Calu3 (cell line): ENCODE measurements at regions of chr19 and their contacts with region 1.

Region 1: GRCh38 chr19:18251587-18252369 is 22.5 kb downstream of the IQCN start:
- DNase-seq: peak; percentile 75
- H3K4me3 Mint-ChIP-seq: no peak overlapping the region
- H3K27ac Mint-ChIP-seq: no peak overlapping the region
- H3K4me1 Mint-ChIP-seq: peaks cover 21% of the 10 kb centered on the region
- H3K27me3 Mint-ChIP-seq: no peaks in the 10 kb centered on the region
- CTCF ChIP-seq: peak; percentile 76

Region 2: GRCh38 chr19:18007044-18007916 is 244.5 kb before region 1 on chr19:
- CTCF ChIA-PET with region 1: no interaction called
- intact Hi-C with region 1: loop called (anchors 5 kb)
- DNase-seq: peak; percentile 84
- H3K4me3 Mint-ChIP-seq: peak overlapping the region; percentile 72
- H3K27ac Mint-ChIP-seq: peak overlapping the region; percentile 30
- H3K4me1 Mint-ChIP-seq: peaks cover 11% of the 10 kb centered on the region
- H3K27me3 Mint-ChIP-seq: no peaks in the 10 kb centered on the region
- CTCF ChIP-seq: peak; percentile 76

Region 3: GRCh38 chr19:18112989-18113478 is 138.7 kb before region 1 on chr19:
- CTCF ChIA-PET with region 1: interaction called, 14 read pairs
- intact Hi-C with region 1: no loop called
- DNase-seq: peak; percentile 89
- H3K4me3 Mint-ChIP-seq: no peak overlapping the region
- H3K27ac Mint-ChIP-seq: no peak overlapping the region
- H3K4me1 Mint-ChIP-seq: peaks cover 19% of the 10 kb centered on the region
- H3K27me3 Mint-ChIP-seq: no peaks in the 10 kb centered on the region
- CTCF ChIP-seq: peak; percentile 57

Region 4: DNA sequence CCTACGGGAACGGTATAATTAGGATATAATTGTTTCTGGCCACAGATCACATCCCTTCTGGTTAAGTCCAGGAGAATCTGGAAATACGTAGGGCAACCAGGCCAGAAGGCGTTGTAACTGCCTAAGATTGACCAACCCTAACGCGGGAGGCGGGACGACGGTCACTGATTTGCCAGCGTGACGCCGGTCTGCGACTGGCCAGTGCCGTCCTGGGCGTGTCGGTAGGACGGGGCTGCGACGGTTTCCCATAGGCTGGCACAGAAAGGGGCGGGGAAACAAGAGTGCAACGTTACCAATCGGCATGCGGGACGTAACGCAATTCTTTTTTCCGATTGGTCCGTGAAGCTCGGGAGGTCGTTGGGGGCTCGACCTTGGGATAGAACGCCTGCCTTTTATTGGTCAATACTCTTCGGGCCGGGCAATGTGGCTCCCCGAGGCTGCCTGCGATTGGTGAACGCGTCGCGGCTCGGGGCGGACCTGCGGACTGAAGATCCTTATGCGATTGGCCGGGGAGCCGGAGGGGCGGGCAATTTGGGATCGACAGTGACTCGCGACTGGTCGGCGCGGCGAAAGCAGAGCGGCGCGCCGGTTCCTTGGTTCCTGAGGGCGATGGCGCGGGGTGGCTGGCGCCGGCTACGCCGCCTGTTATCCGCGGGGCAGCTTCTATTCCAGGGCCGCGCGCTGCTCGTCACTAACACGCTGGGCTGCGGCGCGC is 58.9 kb before region 1 on chr19 and contains the start of gene MPV17L2:
- CTCF ChIA-PET with region 1: interaction called, 15 read pairs
- intact Hi-C with region 1: no loop called
- DNase-seq: peak; percentile 96
- H3K4me3 Mint-ChIP-seq: peak within 1 kb of the TSS; percentile 72
- H3K27ac Mint-ChIP-seq: peak within 1 kb of the TSS; percentile 92
- H3K4me1 Mint-ChIP-seq: peaks cover 8% of the 10 kb centered on the region
- H3K27me3 Mint-ChIP-seq: no peaks in the 10 kb centered on the region
- CTCF ChIP-seq: no peak
- total RNA-seq, gene MPV17L2: 10.9 and 11.5 TPM in 2 replicates

Region 5: GRCh38 chr19:18205200-18205892 is 46.4 kb before region 1 on chr19:
- CTCF ChIA-PET with region 1: interaction called, 16 read pairs
- intact Hi-C with region 1: loop called (anchors 5 kb)
- DNase-seq: peak; percentile 23
- H3K4me3 Mint-ChIP-seq: peak overlapping the region; percentile 90
- H3K27ac Mint-ChIP-seq: peak overlapping the region; percentile 79
- H3K4me1 Mint-ChIP-seq: no peaks in the 10 kb centered on the region
- H3K27me3 Mint-ChIP-seq: peaks cover 10% of the 10 kb centered on the region
- CTCF ChIP-seq: no peak